ENCODE measurements at regions of chr1 and their contacts with region 1.

Region 1: DNA sequence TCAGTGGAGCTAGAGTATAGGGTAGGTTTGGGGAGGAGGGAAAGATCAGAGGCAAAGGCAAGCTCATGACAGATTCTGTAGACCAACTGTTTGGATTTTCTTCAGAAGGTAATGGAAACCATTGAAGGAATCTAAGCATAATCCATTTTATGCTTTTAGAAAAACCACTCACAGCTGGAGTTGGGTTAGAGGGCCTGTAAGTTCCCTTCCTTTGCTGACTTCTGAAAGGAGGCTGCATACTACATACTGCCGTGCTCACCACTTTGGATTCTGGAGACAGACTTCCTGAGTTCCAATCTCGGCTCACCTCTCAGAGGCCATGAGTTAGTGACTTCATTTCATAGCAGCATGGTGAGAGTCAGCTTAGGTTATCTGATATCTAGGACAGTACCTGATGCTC is 6.4 kb upstream of the SYT2 start:
- DNase-seq: no peak
- ATAC-seq: no peak
- H3K4me3 ChIP-seq: no peak overlapping the region
- H3K4me3 Mint-ChIP-seq: no peak overlapping the region
- H3K27ac ChIP-seq: no peak overlapping the region
- H3K27ac Mint-ChIP-seq: no peak overlapping the region
- H3K4me1 ChIP-seq: no peaks in the 10 kb centered on the region
- H3K4me1 Mint-ChIP-seq: peaks cover 3% of the 10 kb centered on the region
- H3K27me3 ChIP-seq: no peaks in the 10 kb centered on the region
- H3K27me3 Mint-ChIP-seq: peaks cover 22% of the 10 kb centered on the region
- CTCF ChIP-seq: no peak

Region 2: GRCh38 chr1:202462342-202463076 is 254.1 kb before region 1 on chr1:
- CTCF ChIA-PET with region 1: interaction called, 21 read pairs
- POLR2A ChIA-PET with region 1: no interaction called
- intact Hi-C with region 1: loop called (anchors 1 to 2 kb)
- DNase-seq: no peak
- ATAC-seq: no peak
- H3K4me3 ChIP-seq: no peak overlapping the region
- H3K4me3 Mint-ChIP-seq: no peak overlapping the region
- H3K27ac ChIP-seq: no peak overlapping the region
- H3K27ac Mint-ChIP-seq: peak overlapping the region; percentile 16
- H3K4me1 ChIP-seq: no peaks in the 10 kb centered on the region
- H3K4me1 Mint-ChIP-seq: no peaks in the 10 kb centered on the region
- H3K27me3 ChIP-seq: no peaks in the 10 kb centered on the region
- H3K27me3 Mint-ChIP-seq: no peaks in the 10 kb centered on the region
- CTCF ChIP-seq: no peak

Region 3: GRCh38 chr1:202728951-202729350 is 12.3 kb after region 1 on chr1:
- CTCF ChIA-PET with region 1: interaction called, 19 read pairs
- POLR2A ChIA-PET with region 1: no interaction called
- intact Hi-C with region 1: no loop called
- DNase-seq: no peak
- ATAC-seq: no peak
- H3K4me3 ChIP-seq: no peak overlapping the region
- H3K4me3 Mint-ChIP-seq: no peak overlapping the region
- H3K27ac ChIP-seq: no peak overlapping the region
- H3K27ac Mint-ChIP-seq: no peak overlapping the region
- H3K4me1 ChIP-seq: no peaks in the 10 kb centered on the region
- H3K4me1 Mint-ChIP-seq: no peaks in the 10 kb centered on the region
- H3K27me3 ChIP-seq: no peaks in the 10 kb centered on the region
- H3K27me3 Mint-ChIP-seq: no peaks in the 10 kb centered on the region
- CTCF ChIP-seq: no peak

Measured in CD8-positive, alpha-beta T cell (primary cell).